Right ventricle myocardium inferior (tissue), 1 donor: ENCODE measurements at regions of chr4 and their contacts with region 1.

Region 1: GRCh38 chr4:139815778-139816601 is 150.4 kb downstream of the MGST2 start:
- DNase-seq: no peak
- ATAC-seq: peak; percentile 72

Region 2: DNA sequence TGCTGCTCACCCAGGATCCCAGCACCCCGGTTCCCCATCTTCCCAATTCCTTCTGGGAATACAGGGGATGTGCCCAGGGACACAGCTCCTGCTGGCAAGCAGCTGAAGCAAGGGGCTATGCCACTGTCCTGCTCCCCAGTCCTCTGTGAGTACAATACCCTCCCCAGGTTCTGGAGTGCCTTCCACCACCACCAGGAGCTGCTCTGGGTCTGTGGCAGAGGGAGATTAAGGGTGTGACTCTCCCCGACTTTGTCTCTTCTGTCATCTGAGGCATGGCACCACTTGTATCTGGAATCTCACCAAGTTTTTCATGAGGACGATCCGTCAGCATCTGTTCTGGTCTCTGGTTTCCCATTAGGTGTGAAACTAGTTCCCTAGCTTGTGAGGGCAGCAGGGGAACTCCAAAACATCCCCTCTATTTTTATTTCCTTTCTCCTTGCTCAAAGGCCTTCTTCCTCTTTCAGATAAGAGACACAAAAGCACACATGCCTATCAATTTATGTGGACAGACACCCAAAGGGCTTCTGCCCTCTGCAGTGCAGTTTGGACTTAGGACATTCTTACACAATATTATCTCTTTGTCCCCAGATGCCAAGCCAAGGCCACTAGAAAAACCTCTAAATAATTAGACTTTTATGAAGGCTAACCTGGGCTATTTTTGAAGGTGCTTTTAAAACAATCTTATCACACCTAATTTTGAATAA is 123.5 kb before region 1 on chr4:
- intact Hi-C with region 1: no loop called
- DNase-seq: no peak
- ATAC-seq: peak; percentile 85

Region 3: DNA sequence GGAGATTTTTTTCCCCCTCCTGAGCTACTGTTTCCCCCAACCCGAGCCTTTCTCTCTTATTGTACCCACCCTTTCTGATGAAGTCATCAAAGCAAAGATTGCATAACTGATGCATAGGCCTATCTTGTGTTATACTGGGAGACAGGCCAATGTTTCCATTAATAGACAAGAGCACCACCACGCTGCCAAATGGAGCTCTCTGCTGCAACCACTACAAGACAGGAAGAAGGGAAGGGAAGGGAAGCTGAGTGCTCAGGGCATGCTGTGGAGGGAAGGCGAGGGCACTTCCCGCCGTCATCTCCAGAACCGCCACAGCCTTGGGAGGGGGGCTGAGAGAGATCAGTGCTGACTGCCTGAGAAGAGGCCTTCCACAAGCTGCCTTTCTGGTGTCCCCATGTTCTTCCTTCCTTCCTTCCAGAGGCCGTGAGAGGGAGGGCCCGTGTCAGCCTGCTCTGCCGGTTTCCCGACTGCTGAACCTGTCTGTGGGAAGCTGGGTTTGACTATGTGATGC is 75.4 kb before region 1 on chr4:
- intact Hi-C with region 1: loop called (anchors 2 kb)
- DNase-seq: peak; percentile 83
- ATAC-seq: peak; percentile 94

Region 4: GRCh38 chr4:139763672-139764071 is 52.3 kb before region 1 on chr4:
- intact Hi-C with region 1: loop called (anchors 2 kb)
- DNase-seq: no peak
- ATAC-seq: peak; percentile 66

Region 5: DNA sequence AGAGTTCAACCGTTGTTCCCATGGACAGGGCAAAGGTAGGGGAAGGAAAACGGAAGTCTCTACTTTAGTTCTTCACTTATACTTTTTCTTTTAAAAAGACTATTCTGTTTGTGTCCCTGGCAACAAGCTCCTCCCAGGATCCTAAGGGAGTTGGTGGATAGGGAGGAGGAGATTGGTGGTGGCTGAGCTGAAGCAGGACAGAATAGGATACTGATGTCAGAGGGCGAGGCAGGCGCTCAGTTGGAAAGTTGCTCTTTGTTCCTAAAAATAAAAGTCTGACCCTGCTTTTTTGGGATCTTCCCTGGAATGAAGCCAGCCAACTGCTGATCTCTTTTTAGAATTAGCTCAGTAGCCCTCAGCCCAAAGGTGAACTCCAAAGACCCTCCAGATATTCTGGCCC is 45.6 kb before region 1 on chr4:
- intact Hi-C with region 1: loop called (anchors 2 kb)
- DNase-seq: peak; percentile 69
- ATAC-seq: peak; percentile 83

Region 6: GRCh38 chr4:139858436-139859225 is 42.6 kb after region 1 on chr4:
- intact Hi-C with region 1: no loop called
- DNase-seq: no peak
- ATAC-seq: no peak

Region 7: DNA sequence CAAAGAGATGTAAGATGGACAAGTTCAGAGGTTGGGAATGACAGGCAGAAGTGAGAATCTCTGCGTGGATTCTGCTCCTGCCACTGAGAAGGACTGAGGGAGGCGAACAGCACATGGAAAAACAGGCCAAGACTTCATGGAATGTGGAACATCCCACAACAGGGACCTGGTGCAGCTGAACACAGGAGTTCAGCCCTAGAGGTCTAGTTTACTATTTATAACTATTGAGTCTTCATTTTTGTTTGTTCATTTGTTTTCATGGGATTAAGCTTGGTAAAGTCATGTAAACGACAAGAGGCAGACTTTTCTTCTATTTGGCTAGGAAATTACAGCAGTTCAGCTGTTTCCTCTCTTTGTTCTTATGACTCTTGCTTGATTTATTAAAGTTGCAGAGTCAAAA is 103.5 kb after region 1 on chr4:
- intact Hi-C with region 1: loop called (anchors 5 kb)
- DNase-seq: no peak
- ATAC-seq: peak; percentile 76